Ascending aorta (tissue), 2 donors: ENCODE measurements at regions of chr5 and their contacts with region 1.

Region 1: DNA sequence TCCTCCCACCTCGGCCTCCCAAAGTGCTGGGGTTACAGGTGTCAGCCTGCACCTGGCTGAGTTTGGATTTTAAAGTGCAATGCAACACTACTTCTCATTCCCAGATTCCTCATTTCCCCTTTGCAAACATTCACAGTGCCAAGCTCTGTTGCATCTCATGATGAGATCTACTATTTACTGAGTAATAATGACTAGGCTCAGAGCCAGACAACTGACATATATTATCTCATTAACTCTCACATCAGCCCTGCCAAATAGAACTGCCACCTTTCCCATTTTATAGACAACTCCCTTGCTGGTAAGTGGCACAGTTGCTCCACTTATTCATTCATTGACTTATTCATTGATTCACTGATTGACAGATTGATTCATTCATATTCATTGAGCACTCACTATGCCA is 7.0 kb downstream of the PDE6A start:
- DNase-seq: no peak
- H3K4me3 ChIP-seq: no peak overlapping the region
- H3K27ac ChIP-seq: peak overlapping the region; percentile 62 to 82
- H3K4me1 ChIP-seq: peaks cover 5 to 40% of the 10 kb centered on the region in 2 donors
- H3K27me3 ChIP-seq: no peaks in the 10 kb centered on the region
- CTCF ChIP-seq: no peak

Region 2: GRCh38 chr5:149878039-149878747 is 59.4 kb before region 1 on chr5:
- intact Hi-C with region 1: no loop called
- DNase-seq: no peak
- H3K4me3 ChIP-seq: no peak overlapping the region
- H3K27ac ChIP-seq: no peak overlapping the region
- H3K4me1 ChIP-seq: no peaks in the 10 kb centered on the region
- H3K27me3 ChIP-seq: no peaks in the 10 kb centered on the region
- CTCF ChIP-seq: no peak

Region 3: DNA sequence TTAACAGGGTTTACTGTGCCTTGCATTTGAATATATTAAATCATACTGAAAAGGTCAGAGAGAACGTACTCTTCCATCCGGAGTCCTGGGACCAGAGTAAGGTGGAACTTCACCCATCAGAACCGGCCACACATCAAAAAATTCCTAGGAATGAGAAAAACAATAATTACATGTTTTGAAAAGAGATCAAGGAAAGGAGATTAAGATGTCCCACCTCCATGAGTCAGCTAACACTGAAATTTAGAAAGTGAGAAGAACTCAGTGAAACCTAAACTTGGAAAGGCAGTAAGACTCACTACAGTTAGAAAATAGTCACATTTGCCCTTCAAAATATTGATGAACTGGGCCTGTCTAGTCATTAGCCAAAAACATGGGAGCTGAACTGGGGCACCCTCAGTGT is 16.1 kb before region 1 on chr5:
- intact Hi-C with region 1: loop called (anchors 2 kb)
- DNase-seq: no peak
- H3K4me3 ChIP-seq: no peak overlapping the region
- H3K27ac ChIP-seq: no peak overlapping the region
- H3K4me1 ChIP-seq: peaks cover 3 to 23% of the 10 kb centered on the region in 2 donors
- H3K27me3 ChIP-seq: no peaks in the 10 kb centered on the region
- CTCF ChIP-seq: no peak